ENCODE measurements at regions of chrX and their contacts with region 1.

Region 1: DNA sequence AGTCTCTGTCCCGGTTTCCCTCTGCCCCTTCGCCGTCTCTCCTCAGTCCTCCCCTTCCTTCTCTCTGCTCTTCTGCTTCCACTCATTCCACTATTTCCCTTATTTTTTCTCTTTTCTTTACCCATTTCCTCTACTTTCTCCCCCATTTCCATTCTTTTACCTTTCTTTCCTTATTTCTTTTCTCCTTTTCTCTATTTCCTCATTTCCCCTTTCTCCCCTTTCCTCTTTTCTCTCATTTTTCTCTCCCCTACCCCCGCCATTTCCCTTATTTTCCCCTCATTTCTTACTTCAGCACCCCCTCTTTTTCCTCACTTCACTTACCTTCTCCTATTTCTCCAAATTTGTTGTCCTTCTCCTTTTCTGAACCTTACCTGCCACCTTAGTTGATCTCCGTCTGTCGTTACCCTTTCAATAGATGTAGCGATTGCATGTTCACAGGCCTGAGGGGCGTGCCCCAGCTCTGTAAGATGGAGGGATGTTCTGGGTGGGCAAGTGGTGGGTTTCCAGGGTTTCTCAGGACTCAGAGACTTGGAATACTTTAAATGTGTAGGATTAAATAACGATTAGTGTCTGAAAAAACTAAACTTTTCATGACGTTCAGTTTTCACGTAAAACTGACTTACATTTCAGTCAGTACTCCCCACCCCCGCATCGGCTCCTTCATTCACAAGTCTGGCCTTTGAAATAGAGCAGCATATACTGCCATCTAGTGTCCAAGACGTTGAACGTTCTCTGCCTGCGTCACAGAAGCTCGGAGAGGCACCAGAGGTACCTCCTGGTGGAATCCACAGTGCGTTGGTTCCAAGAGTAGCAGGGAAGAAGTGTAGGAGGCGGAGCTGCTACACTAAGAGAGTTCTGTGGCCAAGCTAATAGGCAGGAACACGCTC is 641 bp upstream of the NCBP2L start:
- DNase-seq: peak; percentile 23
- ATAC-seq: peak; percentile 72
- H3K4me3 Mint-ChIP-seq: peak overlapping the region; percentile 87
- H3K27ac Mint-ChIP-seq: peak overlapping the region; percentile 77
- H3K4me1 Mint-ChIP-seq: peaks cover 14% of the 10 kb centered on the region
- H3K27me3 Mint-ChIP-seq: no peaks in the 10 kb centered on the region
- CTCF ChIP-seq: no peak

Region 2: DNA sequence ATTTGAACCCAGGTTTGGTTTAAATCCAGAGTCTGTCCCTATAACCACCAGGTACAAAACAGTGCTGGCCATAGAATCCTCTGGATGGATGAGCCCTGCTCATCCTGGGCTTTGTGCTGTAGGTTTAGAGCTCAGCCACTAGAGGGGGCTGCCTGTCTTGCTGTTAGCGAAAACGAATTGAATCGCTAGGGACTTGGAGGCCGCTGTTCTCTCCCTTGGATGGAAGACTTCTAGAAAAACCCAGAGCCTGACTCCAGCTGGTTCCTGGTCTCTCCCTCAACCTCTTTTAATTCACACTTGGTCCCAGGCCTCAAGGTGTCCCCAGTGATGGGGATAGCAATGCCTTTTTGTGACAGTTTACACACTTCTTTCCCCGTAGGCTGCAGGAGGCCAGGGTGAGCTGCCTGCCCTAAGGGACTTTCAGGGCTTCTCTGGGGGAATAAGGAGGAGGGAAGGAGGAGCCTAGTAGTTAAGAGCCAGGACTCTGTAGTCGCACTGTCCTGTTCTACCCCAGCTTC is 882.4 kb before region 1 on chrX:
- CTCF ChIA-PET with region 1: interaction called, 4 read pairs
- POLR2A ChIA-PET with region 1: no interaction called
- intact Hi-C with region 1: loop called (anchors 1 kb)
- DNase-seq: no peak
- ATAC-seq: no peak
- H3K4me3 Mint-ChIP-seq: no peak overlapping the region
- H3K27ac Mint-ChIP-seq: no peak overlapping the region
- H3K4me1 Mint-ChIP-seq: no peaks in the 10 kb centered on the region
- H3K27me3 Mint-ChIP-seq: no peaks in the 10 kb centered on the region
- CTCF ChIP-seq: no peak

Region 3: GRCh38 chrX:107025545-107025944 is 751.3 kb before region 1 on chrX:
- CTCF ChIA-PET with region 1: interaction called, 6 read pairs
- POLR2A ChIA-PET with region 1: no interaction called
- intact Hi-C with region 1: loop called (anchors 1 kb)
- DNase-seq: no peak
- ATAC-seq: no peak
- H3K4me3 Mint-ChIP-seq: no peak overlapping the region
- H3K27ac Mint-ChIP-seq: no peak overlapping the region
- H3K4me1 Mint-ChIP-seq: no peaks in the 10 kb centered on the region
- H3K27me3 Mint-ChIP-seq: peaks cover 1% of the 10 kb centered on the region
- CTCF ChIP-seq: no peak

Region 4: GRCh38 chrX:107450823-107451509 is 325.9 kb before region 1 on chrX:
- CTCF ChIA-PET with region 1: no interaction called
- POLR2A ChIA-PET with region 1: no interaction called
- intact Hi-C with region 1: loop called (anchors 10 kb)
- DNase-seq: no peak
- ATAC-seq: peak; percentile 38
- H3K4me3 Mint-ChIP-seq: peak overlapping the region; percentile 77
- H3K27ac Mint-ChIP-seq: no peak overlapping the region
- H3K4me1 Mint-ChIP-seq: peaks cover 23% of the 10 kb centered on the region
- H3K27me3 Mint-ChIP-seq: no peaks in the 10 kb centered on the region
- CTCF ChIP-seq: no peak

Region 5: DNA sequence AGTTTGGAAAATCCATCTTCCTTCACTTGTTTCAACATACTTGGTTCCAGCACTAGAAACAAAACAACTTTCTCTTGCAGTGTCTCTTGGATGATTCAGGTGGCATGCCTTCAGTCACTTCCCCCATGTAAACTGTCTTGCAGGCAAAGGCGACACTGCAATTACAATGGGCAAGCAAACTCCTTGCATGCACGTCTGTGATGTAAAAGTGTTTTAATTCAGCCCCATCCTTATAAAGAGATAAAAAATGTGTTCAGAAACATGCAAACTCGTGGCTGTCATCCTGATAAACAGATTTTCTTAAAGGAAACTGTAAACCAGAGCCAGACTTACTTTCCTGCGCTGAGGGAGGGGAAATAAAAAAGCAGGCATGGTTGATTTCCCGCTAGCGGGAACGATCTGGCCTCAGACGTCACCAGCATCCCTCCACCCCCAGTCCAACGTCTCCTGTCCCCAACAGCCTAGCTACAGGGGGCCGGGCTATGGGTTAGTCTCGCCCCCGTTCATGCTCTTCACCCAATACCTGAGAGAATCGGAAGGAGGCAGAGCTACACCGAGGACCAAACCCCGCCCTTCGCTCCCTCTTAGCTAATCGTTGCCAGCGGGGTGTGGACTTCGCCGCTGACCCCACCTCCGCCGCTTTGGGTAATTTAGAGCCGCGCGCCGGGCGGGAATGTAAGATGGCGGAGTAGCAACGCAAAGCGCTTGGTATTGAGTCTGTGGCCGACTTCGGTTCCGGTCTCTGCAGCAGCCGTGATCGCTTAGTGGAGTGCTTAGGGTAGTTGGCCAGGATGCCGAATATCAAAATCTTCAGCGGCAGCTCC is 148.8 kb before region 1 on chrX and contains the start of gene PRPS1:
- CTCF ChIA-PET with region 1: interaction called, 4 read pairs
- POLR2A ChIA-PET with region 1: no interaction called
- intact Hi-C with region 1: loop called (anchors 1 kb)
- DNase-seq: peak; percentile 68
- ATAC-seq: peak; percentile 99
- H3K4me3 Mint-ChIP-seq: peak within 1 kb of the TSS; percentile 93
- H3K27ac Mint-ChIP-seq: peak within 1 kb of the TSS; percentile 93
- H3K4me1 Mint-ChIP-seq: peaks cover 31% of the 10 kb centered on the region
- H3K27me3 Mint-ChIP-seq: no peaks in the 10 kb centered on the region
- CTCF ChIP-seq: no peak
- total RNA-seq, gene PRPS1: 49.7 and 53.8 TPM in 2 replicates

Region 6: GRCh38 chrX:107672955-107673378 is 103.9 kb before region 1 on chrX:
- CTCF ChIA-PET with region 1: interaction called, 66 read pairs
- POLR2A ChIA-PET with region 1: interaction called, 35 read pairs
- intact Hi-C with region 1: loop called (anchors 1 kb)
- DNase-seq: peak; percentile 62
- ATAC-seq: peak; percentile 41
- H3K4me3 Mint-ChIP-seq: peak overlapping the region; percentile 50
- H3K27ac Mint-ChIP-seq: peak overlapping the region; percentile 96
- H3K4me1 Mint-ChIP-seq: peaks cover 50% of the 10 kb centered on the region
- H3K27me3 Mint-ChIP-seq: no peaks in the 10 kb centered on the region
- CTCF ChIP-seq: no peak

Region 7: DNA sequence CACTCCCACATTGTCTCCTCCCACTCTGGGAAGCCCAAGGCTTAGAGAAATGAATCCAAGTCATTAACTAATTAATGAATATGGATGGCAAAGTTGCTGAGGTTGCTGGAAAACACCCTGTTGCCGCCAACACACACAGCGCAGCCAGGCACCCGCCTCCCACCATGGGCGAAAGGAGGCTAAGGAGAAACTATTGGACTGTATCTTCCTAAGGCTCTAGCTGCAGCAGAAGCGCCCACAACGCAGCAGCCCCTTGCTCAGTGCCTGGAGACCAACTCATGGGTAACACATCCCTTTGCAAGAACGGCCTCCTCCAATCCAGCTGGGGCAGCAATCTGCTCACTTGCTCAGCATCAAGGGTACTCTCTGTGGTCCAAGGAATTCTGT is 35.5 kb before region 1 on chrX:
- CTCF ChIA-PET with region 1: interaction called, 4 read pairs
- POLR2A ChIA-PET with region 1: no interaction called
- intact Hi-C with region 1: loop called (anchors 5 kb)
- DNase-seq: peak; percentile 14
- ATAC-seq: peak; percentile 12
- H3K4me3 Mint-ChIP-seq: peak overlapping the region; percentile 89
- H3K27ac Mint-ChIP-seq: peak overlapping the region; percentile 98
- H3K4me1 Mint-ChIP-seq: peaks cover 20% of the 10 kb centered on the region
- H3K27me3 Mint-ChIP-seq: no peaks in the 10 kb centered on the region
- CTCF ChIP-seq: no peak

Region 8: DNA sequence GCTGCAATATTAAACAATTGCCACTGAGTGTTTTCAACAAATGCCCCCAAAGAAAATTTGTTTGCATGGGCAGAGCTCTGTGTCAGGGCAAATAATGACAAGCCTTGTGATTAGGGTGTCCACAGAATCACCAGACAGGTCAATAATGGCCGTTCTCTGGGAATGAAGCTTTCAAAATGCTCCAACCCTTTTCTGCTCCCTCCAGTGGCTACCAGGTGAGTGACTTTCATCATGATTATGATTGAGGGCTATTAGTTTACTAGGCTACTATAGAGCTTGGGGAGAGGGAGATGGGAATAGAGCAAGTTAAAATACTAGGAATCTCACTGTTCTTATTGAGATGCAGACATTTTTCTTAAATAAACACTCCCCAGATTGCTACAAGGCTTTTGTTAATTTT is 936.0 kb after region 1 on chrX:
- CTCF ChIA-PET with region 1: no interaction called
- POLR2A ChIA-PET with region 1: no interaction called
- intact Hi-C with region 1: no loop called
- DNase-seq: no peak
- ATAC-seq: no peak
- H3K4me3 Mint-ChIP-seq: no peak overlapping the region
- H3K27ac Mint-ChIP-seq: no peak overlapping the region
- H3K4me1 Mint-ChIP-seq: no peaks in the 10 kb centered on the region
- H3K27me3 Mint-ChIP-seq: no peaks in the 10 kb centered on the region
- CTCF ChIP-seq: no peak

Measured in activated B cell treated with CpG ODN at 0.5 μM for 24 hours (primary cell).